Activated B cell treated with CpG ODN at 0.5 μM for 24 hours (primary cell): ENCODE measurements at regions of chr6 and their contacts with region 1.

Region 1: GRCh38 chr6:137094411-137095008 is 49.7 kb upstream of the IL20RA start:
- DNase-seq: no peak
- ATAC-seq: peak; percentile 34
- H3K4me3 Mint-ChIP-seq: peak overlapping the region; percentile 38
- H3K27ac Mint-ChIP-seq: peak overlapping the region; percentile 93
- H3K4me1 Mint-ChIP-seq: peaks cover 63% of the 10 kb centered on the region
- H3K27me3 Mint-ChIP-seq: no peaks in the 10 kb centered on the region
- CTCF ChIP-seq: peak; percentile 71

Region 2: GRCh38 chr6:136728976-136729515 is 365.5 kb before region 1 on chr6:
- CTCF ChIA-PET with region 1: no interaction called
- POLR2A ChIA-PET with region 1: no interaction called
- intact Hi-C with region 1: no loop called
- DNase-seq: no peak
- ATAC-seq: no peak
- H3K4me3 Mint-ChIP-seq: no peak overlapping the region
- H3K27ac Mint-ChIP-seq: no peak overlapping the region
- H3K4me1 Mint-ChIP-seq: peaks cover 52% of the 10 kb centered on the region
- H3K27me3 Mint-ChIP-seq: no peaks in the 10 kb centered on the region
- CTCF ChIP-seq: no peak

Region 3: DNA sequence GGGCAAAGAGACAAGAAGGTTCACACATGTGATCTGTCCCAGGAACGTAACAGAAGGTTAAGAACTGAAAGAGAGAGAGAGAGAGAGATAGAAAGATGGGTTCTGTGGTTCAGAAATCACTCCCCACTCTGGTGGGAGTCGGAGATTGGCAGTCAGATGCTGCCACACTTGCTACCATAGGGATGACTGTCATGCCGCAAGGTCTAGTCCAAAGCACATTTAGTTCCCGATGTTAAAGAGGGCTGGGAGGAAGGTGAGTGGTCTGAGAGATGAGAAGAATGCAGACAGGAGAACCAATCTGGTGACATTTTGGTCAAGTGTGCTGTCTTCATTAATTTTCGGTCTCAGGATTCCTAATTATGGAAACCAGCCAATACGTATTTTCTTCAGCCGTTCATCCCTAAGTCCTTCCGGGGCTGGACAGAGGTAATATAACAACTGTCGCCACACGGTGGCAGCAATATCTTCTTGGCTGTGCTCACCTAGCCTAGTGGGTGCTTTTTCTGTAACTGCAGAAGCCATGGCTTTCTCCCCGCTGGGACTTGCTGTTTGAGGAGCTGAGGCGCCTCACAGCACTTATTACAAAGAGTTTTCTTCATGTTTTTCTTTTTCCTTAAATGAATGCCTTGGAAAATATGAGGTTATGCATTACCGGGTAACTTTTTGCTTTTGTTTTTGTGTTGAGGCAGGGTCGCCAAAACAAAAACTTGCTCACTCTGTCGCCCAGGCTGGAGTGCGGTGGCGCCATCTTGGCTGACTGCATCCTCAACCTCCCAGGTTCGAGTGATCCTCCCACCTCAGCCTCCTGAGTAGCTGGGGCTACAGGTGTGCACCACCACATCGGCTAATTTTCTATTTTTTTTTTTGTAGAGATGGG is 126.4 kb before region 1 on chr6:
- CTCF ChIA-PET with region 1: interaction called, 4 read pairs
- POLR2A ChIA-PET with region 1: no interaction called
- intact Hi-C with region 1: loop called (anchors 1 kb)
- DNase-seq: peak; percentile 39
- ATAC-seq: peak; percentile 93
- H3K4me3 Mint-ChIP-seq: no peak overlapping the region
- H3K27ac Mint-ChIP-seq: no peak overlapping the region
- H3K4me1 Mint-ChIP-seq: peaks cover 4% of the 10 kb centered on the region
- H3K27me3 Mint-ChIP-seq: peaks cover 12% of the 10 kb centered on the region
- CTCF ChIP-seq: peak; percentile 22

Region 4: GRCh38 chr6:137171824-137172705 is 77.6 kb after region 1 on chr6:
- CTCF ChIA-PET with region 1: interaction called, 82 read pairs
- POLR2A ChIA-PET with region 1: interaction called, 44 read pairs
- intact Hi-C with region 1: no loop called
- DNase-seq: no peak
- ATAC-seq: peak; percentile 68
- H3K4me3 Mint-ChIP-seq: peak overlapping the region; percentile 63
- H3K27ac Mint-ChIP-seq: peak overlapping the region; percentile 95
- H3K4me1 Mint-ChIP-seq: peaks cover 90% of the 10 kb centered on the region
- H3K27me3 Mint-ChIP-seq: no peaks in the 10 kb centered on the region
- CTCF ChIP-seq: no peak

Region 5: DNA sequence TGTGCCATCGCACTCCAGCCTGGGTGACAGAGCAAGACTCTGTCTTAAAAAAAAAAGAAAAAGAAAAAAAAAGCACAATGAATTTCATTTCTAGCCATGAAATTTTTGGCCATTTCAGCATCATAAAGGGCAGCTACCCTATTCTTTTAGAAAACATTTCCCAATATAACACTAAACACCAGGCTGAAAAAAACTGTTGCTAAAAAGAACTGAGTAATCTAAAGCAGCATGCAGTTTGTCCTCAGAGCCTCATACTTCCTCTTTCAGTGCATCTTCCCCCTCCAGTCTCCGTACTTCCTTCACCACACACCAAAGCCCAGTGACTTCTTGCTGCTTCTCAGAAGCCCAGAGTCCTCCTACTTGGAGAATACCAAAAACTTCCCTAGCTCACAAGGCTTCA is 130.3 kb after region 1 on chr6:
- CTCF ChIA-PET with region 1: interaction called, 25 read pairs
- POLR2A ChIA-PET with region 1: interaction called, 18 read pairs
- intact Hi-C with region 1: no loop called
- DNase-seq: no peak
- ATAC-seq: peak; percentile 85
- H3K4me3 Mint-ChIP-seq: peak overlapping the region; percentile 35
- H3K27ac Mint-ChIP-seq: peak overlapping the region; percentile 85
- H3K4me1 Mint-ChIP-seq: peaks cover 71% of the 10 kb centered on the region
- H3K27me3 Mint-ChIP-seq: no peaks in the 10 kb centered on the region
- CTCF ChIP-seq: no peak

Region 6: GRCh38 chr6:137313928-137314855 is 219.7 kb after region 1 on chr6:
- CTCF ChIA-PET with region 1: interaction called, 102 read pairs
- POLR2A ChIA-PET with region 1: interaction called, 8 read pairs
- intact Hi-C with region 1: loop called (anchors 1 kb)
- DNase-seq: peak; percentile 31
- ATAC-seq: peak; percentile 90
- H3K4me3 Mint-ChIP-seq: no peak overlapping the region
- H3K27ac Mint-ChIP-seq: no peak overlapping the region
- H3K4me1 Mint-ChIP-seq: peaks cover 30% of the 10 kb centered on the region
- H3K27me3 Mint-ChIP-seq: no peaks in the 10 kb centered on the region
- CTCF ChIP-seq: peak; percentile 66

Region 7: DNA sequence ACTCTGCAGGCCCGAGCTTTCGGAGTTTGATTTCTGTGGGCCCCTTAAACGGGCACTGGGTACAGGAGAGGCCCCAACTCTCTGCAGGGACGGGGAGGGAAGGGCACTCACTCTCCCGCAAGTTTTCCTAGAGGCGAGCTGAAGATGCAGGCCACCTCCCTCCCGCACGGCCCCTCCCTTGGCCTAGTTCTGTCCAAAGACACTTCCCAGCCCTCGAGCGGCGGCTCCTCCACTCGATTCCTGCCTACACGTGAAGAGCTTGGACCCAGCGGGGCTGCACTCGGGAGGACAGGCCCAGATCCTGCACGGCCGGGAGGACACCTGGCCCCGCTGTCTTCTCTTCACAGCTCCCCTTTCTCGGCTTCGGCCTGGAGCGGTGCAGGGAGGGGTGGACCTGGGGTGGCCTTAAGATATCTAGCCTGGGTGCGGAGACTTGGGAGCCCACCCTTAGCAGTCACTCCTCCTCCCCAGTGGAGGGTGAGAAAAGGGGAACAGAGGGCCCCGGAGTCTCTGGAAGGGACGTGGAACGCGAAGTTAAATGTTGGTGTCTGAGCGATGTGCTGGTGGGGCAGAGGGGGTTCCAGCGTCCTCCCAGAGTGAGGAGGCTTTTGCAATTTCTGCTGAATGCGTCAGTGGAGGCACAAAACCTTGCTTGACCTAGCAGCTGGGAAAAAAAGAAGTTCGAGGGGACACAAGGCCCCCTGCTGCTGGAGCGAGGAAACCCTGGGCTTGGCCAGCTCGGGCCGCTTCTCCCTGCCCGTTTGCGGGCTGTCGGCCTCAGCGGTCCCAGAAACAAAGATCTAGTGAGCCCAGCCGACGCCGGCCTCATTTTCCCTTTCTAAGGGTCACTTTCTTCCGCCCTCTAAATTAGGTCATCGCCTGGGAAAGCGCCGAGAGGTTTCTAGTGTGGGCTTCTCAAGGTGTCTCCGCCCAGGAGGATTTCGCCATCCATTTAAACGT is 394.8 kb after region 1 on chr6:
- CTCF ChIA-PET with region 1: interaction called, 5 read pairs
- POLR2A ChIA-PET with region 1: no interaction called
- intact Hi-C with region 1: loop called (anchors 5 kb)
- DNase-seq: no peak
- ATAC-seq: peak; percentile 10
- H3K4me3 Mint-ChIP-seq: peak overlapping the region; percentile 33
- H3K27ac Mint-ChIP-seq: no peak overlapping the region
- H3K4me1 Mint-ChIP-seq: peaks cover 47% of the 10 kb centered on the region
- H3K27me3 Mint-ChIP-seq: peaks cover 78% of the 10 kb centered on the region
- CTCF ChIP-seq: no peak